Ascending aorta (tissue), 2 donors: ENCODE measurements at regions of chr6 and their contacts with region 1.

Region 1: DNA sequence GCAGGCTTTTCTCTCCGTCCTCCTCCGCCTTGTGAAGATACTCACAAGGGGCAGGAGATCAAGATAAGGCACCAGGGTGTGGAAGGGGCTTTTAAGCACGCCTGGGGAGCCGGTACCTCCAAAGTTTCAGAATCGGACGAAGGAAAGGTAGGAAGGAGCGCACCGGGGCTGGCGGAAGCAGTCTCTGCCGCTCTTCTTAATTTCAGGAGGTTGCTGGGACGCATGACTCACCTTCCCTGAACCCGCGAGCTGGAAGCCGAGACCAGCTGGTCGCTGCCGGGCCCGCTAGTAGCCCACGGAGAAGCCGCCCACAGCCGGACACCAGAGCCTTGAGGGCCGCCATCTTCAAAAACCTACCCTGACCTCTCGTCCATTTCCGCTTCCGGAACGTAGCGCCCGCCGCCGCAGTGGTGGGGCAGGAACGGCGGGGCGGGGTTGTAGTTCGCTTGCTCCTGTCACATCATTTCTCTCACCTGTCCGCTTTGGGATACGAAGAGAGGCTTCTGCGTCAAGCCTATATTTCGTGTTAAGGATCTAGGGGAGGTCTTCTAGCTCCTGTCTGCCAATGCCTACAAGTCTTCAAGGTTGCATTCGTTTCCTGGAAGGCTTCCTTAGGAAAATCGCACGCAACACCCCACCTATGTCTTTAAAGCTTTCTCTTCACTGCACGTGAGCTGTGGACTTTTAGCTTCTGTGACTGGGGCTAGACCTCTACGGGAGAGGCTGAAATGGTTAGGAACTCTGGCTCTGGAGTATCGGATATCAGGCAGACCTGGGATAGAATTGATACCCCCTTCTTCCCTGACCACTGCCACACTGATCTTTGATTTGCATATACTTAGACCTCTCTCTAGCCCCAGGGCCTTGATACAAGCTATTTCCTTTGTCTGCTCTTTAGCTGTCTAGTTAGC is at the start of gene MRPS18A:
- DNase-seq: peak; percentile 38 to 91
- H3K4me3 ChIP-seq: peak within 1 kb of the TSS; percentile 84 to 89
- H3K27ac ChIP-seq: peak within 1 kb of the TSS; percentile 77 to 83
- H3K4me1 ChIP-seq: peaks cover 4 to 12% of the 10 kb centered on the region in 2 donors
- H3K27me3 ChIP-seq: no peaks in the 10 kb centered on the region
- CTCF ChIP-seq: no peak
- total RNA-seq, gene MRPS18A: 29.8 TPM

Region 2: GRCh38 chr6:43673444-43674084 is 14.1 kb before region 1 on chr6:
- intact Hi-C with region 1: loop called (anchors 2 kb)
- DNase-seq: no peak
- H3K4me3 ChIP-seq: no peak overlapping the region
- H3K27ac ChIP-seq: peak overlapping the region; percentile 8 to 44
- H3K4me1 ChIP-seq: peaks cover 13 to 19% of the 10 kb centered on the region in 2 donors
- H3K27me3 ChIP-seq: no peaks in the 10 kb centered on the region
- CTCF ChIP-seq: no peak

Region 3: DNA sequence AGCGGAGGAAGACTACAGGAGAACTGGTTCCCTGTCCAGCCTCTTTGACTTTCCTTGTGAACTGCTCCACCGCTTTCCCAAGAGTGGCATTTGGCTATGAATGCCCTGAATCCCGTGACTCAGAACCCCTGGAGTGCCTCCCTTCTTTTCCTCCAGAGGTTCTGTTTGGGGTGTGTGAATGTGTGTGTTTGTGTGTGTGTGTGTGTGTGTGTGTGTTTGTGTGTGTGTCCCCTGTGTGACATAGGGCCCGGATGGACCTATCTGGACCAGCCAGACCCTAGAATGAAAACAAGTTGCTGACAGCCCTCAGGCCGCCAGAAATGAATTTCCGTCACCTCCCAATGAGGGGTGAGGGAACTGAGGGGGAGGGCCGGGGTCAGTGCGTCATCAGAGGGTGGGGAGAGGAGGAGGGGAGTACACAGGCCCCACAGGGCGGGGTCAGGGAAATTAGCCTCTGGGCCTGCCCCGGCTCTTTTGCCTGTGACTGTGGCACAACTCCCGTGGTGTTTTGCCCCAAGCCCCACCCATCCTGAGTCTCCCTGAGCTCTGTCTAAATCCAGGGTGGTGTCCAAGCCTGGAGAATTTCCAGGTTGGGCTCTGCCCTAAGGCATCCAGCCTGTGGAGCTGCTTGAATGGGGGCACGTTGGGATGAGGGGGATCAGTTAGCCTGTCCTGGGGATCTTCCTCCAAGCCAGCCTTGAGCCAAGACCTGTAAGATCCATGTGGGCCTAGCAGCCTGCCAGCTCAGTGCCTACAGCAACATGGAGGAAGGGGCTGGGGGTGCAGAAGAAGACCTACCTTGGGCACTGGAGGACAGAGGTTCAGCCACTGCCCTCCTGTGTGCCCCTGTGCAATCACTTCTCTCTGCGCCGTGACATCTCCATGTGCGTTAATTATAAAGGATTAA is 15.1 kb after region 1 on chr6:
- intact Hi-C with region 1: loop called (anchors 1 kb)
- DNase-seq: peak; percentile 80 to 96
- H3K4me3 ChIP-seq: no peak overlapping the region
- H3K27ac ChIP-seq: peak overlapping the region; percentile 78 to 85
- H3K4me1 ChIP-seq: peaks cover 5 to 19% of the 10 kb centered on the region in 2 donors
- H3K27me3 ChIP-seq: no peaks in the 10 kb centered on the region
- CTCF ChIP-seq: no peak

Region 4: DNA sequence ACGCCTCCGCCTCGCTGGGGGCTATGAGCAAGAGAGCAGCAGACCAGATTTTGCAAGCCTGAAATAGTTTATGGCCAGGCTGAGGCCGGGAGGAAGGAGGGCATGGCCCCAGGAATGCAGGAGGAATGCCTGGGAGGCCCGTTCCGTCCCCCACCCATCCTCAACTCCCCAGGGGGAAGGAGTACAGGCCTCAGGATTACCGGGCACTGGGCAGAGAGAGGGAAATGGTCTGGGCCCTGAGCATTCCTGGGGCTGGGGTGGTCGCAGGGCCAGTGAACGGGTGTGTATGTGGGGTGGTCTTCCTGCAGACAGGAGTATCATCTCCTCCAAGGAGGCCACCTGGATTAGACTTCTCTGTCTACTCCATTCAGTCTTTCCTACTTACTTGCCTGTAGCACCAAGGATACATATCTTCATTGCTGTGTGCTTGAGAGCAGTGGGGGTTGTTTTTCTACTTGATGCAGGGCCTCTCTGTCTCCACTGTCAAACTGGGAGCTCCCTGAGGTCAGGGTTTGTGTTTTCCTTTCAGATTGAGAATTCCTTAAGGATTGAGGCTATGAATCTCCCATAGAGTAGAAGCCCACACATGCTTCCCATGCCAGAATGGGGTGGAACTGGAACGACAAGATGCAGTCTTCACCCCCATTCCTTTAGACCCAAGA is 163.6 kb after region 1 on chr6:
- intact Hi-C with region 1: no loop called
- DNase-seq: no peak
- H3K4me3 ChIP-seq: no peak overlapping the region
- H3K27ac ChIP-seq: no peak overlapping the region
- H3K4me1 ChIP-seq: no peaks in the 10 kb centered on the region
- H3K27me3 ChIP-seq: no peaks in the 10 kb centered on the region
- CTCF ChIP-seq: no peak